HEK293 (cell line): ENCODE measurements at regions of chr22 and their contacts with region 1.

Region 1: DNA sequence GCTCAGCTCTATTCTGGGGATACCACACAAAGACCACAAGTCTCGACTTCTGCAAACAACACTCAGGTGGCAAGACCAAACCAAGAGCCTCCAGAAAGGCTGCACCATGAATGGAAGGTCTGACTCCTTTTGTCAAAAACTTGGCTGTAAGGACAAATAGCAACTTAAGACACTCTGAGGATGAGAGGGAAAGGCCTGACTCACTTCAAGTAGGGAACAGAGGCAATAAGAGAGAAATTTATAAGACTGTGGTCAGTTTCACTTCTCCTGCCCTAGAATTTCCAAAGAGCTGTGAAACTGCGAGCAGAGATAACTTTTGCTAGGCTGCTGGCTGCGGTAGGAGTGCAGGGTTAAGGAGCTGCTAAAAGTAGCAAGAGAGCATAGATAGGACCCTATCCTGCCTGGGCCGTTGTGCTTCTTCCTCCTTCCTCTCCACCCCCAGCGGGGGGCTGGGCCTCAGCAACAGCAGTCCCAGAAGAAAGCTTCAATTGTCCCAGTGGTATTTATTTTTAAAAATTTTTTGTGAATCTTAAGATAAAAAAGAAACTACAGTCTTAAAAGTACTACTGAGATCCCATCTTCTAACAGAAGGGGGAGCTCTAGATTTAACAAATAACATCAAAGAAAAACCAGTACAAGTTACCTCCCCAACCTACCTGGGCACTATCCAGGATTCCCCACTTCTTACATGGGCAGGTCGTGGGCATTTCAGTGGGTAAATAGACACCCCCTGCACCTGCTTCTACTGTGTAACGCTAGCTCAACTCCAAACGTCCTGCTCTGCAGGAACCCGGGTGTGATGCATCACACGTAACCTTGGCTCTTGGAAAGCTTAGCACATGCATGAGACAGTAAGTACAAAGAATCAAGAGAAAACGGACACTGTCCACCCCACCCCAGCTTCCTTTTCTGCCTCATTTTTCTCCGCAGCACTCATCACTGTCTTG is 66.4 kb downstream of the SGSM3 start:
- H3K4me3 ChIP-seq: no peak overlapping the region
- H3K27ac ChIP-seq: no peak overlapping the region
- H3K4me1 ChIP-seq: no peaks in the 10 kb centered on the region
- CTCF ChIP-seq: no peak

Region 2: GRCh38 chr22:40426594-40427333 is 10.0 kb before region 1 on chr22:
- CTCF ChIA-PET with region 1: interaction called, 24 read pairs
- POLR2A ChIA-PET with region 1: no interaction called
- H3K4me3 ChIP-seq: no peak overlapping the region
- H3K27ac ChIP-seq: no peak overlapping the region
- H3K4me1 ChIP-seq: no peaks in the 10 kb centered on the region
- CTCF ChIP-seq: no peak

Region 3: GRCh38 chr22:40466965-40467364 is 30.2 kb after region 1 on chr22:
- CTCF ChIA-PET with region 1: interaction called, 10 read pairs
- POLR2A ChIA-PET with region 1: no interaction called
- H3K4me3 ChIP-seq: no peak overlapping the region
- H3K27ac ChIP-seq: no peak overlapping the region
- H3K4me1 ChIP-seq: no peaks in the 10 kb centered on the region
- CTCF ChIP-seq: no peak

Region 4: DNA sequence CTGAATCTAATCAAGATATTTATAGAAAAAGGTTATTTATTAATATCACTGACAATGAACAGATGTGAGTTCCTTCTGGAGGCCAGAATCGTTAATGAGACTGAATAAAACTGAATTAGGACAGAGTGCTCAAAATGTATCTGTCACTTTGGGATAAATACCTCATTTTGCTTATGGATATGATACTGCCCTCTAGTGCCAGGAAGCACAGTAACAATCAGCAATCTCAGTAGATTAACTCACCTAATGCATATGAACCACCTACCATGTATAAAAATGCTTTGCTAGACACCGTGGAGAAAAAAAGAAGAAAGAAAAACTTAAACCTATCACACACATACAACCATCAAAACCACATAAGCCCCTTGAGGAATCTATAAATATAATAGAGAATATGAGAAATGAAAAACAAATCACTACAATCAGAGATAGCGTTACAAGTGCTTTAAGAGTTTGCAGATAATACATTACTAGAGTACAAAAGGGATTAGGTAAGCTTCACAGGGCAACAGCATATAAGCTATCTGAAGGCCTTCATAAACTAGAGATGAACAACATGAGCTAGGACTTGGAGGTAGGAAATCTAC is 51.0 kb after region 1 on chr22:
- CTCF ChIA-PET with region 1: interaction called, 53 read pairs
- POLR2A ChIA-PET with region 1: no interaction called
- H3K4me3 ChIP-seq: no peak overlapping the region
- H3K27ac ChIP-seq: no peak overlapping the region
- H3K4me1 ChIP-seq: no peaks in the 10 kb centered on the region
- CTCF ChIP-seq: peak; percentile 52; the same call in 1 of the 2 replicates

Region 5: DNA sequence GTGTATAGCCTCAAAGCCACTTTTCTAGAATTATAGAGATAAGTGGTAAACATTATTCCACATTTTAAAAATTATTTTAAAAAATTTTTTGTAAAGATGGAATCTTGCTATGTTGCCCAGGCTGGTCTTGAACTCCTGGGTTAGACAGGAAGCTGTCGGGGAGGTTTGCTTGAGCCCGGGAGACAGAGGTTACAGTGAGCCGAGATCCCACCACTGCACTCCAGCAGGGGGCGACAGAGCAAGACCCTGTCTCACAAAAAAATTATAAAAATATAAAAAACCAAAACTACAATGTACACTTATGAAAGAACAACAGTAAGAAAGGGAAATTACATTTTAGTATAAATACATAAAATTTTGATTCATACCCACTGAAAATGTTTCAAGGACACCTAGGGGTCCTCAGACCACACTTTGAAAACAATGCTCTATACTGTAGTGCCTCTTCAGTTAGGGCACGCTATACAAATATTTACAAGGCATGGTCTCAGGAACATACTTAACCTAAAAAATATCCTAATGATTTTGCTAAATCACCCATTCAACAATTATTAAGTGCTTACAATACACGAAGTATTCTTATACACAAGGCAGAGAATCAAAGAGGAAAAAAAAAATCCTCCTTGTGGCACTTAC is 88.6 kb after region 1 on chr22:
- CTCF ChIA-PET with region 1: interaction called, 37 read pairs
- POLR2A ChIA-PET with region 1: no interaction called
- H3K4me3 ChIP-seq: no peak overlapping the region
- H3K27ac ChIP-seq: no peak overlapping the region
- H3K4me1 ChIP-seq: peaks cover 7% of the 10 kb centered on the region; the same call in 1 of the 2 replicates
- CTCF ChIP-seq: no peak

Region 6: GRCh38 chr22:40651563-40652501 is 215.1 kb after region 1 on chr22:
- CTCF ChIA-PET with region 1: interaction called, 278 read pairs
- POLR2A ChIA-PET with region 1: interaction called, 4 read pairs
- H3K4me3 ChIP-seq: peak overlapping the region; percentile 71
- H3K27ac ChIP-seq: peak overlapping the region; percentile 88
- H3K4me1 ChIP-seq: peaks cover 3% of the 10 kb centered on the region; the same call in 1 of the 2 replicates
- CTCF ChIP-seq: no peak